ENCODE measurements at regions of chr6 and their contacts with region 1.

Region 1: DNA sequence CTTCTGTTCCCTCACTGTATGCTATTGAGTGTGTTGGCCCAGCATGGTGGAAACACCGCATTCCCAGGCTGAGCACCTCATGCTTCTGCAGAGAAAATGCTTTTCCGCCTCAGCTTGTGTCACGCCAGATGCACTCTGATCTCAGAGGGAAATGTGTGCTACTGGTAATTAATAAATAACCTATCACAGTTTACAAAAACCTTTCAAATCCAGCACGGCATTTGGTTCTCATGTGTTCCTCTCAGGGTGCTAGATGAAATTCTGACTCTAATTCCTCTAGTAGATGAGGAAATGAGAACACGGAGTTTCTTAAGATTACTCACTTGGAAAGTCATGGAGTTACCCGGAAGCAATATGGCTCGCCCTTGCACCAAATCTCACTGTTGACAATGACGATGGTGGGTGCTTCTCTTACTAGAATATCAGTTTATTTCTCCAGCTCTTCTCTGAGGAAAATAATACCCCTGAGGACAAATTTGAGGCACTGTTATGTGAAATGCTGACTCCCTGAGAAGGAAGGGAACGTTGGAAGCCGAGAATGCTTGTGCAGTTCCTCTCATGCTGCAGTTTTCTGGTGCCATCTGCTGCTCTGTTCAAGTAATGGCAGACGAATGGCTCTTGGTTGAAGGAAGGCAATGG is 116.6 kb downstream of the RNF144B start:
- DNase-seq: peak; percentile 26 to 76
- ATAC-seq: peak; percentile 93 to 95
- H3K4me3 ChIP-seq: peak overlapping the region; percentile 39
- H3K27ac ChIP-seq: peak overlapping the region; percentile 67 to 80
- H3K4me1 ChIP-seq: no peaks in the 10 kb centered on the region
- CTCF ChIP-seq: peak; percentile 92
- EP300 ChIP-seq: no peak
- POLR2A ChIP-seq: no peak
- RAD21 ChIP-seq: peak; percentile 93 to 96

Region 2: DNA sequence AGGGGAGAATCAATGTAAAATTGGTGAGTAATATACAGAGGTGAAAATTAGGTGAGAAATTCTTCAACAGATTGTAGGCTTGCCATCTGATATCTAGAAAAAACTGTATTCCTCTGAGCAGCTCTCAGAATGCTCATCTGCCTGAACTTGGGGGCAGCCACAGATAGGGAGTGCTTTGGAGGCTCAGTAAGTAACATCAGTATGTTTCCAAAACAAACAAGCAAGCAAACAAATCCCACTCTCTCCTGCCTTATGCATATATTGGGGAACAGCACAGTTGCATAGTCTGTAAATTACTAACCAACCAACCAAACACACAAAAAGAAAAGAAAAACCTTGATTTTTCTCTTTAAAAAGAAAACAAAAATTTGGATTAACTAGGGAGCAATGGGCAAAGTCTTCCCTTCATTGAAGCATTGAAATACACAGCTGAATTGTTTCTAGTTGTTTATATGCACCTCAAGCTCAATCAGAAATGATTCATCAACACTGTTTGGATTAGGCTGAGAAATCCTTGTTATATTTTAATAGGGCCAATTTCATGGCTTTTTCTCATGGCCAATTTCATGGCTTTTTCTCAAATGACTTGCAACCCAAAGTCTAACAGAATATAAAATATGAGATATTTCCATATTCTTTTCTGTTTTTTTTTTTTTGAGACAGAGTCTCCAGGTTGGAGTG is 189.3 kb before region 1 on chr6:
- CTCF ChIA-PET with region 1: interaction called, 10 read pairs
- POLR2A ChIA-PET with region 1: no interaction called
- DNase-seq: no peak
- ATAC-seq: peak in 1 of 2 experiments; percentile 41; a peak in 1 of 6 replicates
- H3K4me3 ChIP-seq: no peak overlapping the region
- H3K27ac ChIP-seq: no peak overlapping the region
- H3K4me1 ChIP-seq: no peaks in the 10 kb centered on the region
- CTCF ChIP-seq: no peak
- EP300 ChIP-seq: no peak
- POLR2A ChIP-seq: no peak
- RAD21 ChIP-seq: no peak

Region 3: GRCh38 chr6:18323935-18324705 is 179.6 kb before region 1 on chr6:
- CTCF ChIA-PET with region 1: interaction called, 79 read pairs
- POLR2A ChIA-PET with region 1: no interaction called
- DNase-seq: peak; percentile 36 to 47
- ATAC-seq: peak; percentile 87 to 90
- H3K4me3 ChIP-seq: no peak overlapping the region
- H3K27ac ChIP-seq: no peak overlapping the region
- H3K4me1 ChIP-seq: no peaks in the 10 kb centered on the region
- CTCF ChIP-seq: peak; percentile 72
- EP300 ChIP-seq: no peak
- POLR2A ChIP-seq: no peak
- RAD21 ChIP-seq: peak; percentile 76 to 78

Region 4: GRCh38 chr6:18488526-18489270 is 15.0 kb before region 1 on chr6:
- CTCF ChIA-PET with region 1: interaction called, 11 read pairs
- POLR2A ChIA-PET with region 1: no interaction called
- DNase-seq: no peak
- ATAC-seq: no peak
- H3K4me3 ChIP-seq: no peak overlapping the region
- H3K27ac ChIP-seq: no peak overlapping the region
- H3K4me1 ChIP-seq: peaks cover 8% of the 10 kb centered on the region; the same call in 2 of the 3 replicates
- CTCF ChIP-seq: no peak
- EP300 ChIP-seq: no peak
- POLR2A ChIP-seq: no peak
- RAD21 ChIP-seq: no peak

Measured in A549 (cell line).